ENCODE measurements at regions of chr9 and their contacts with region 1.

Region 1: DNA sequence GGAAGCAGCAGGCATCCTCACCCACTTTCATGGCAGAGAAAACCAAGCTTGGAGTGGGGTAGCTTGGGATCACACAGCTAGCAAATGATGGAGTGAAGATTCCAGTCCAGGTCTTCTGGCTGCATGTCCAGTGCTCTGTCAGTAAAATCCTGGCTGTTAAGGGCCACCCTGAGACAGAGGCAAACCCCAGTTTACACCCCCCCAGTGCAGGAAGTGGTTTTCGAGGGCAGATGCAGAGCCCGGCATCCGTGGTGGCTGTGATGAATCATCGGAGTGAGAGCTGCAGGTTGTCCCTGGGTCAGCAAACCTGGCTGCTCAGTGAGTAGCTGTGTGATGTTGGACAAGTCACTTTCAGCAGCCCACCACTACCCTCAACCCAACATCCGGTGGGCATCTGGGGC is 115.4 kb downstream of the RGS3 start:
- DNase-seq: peak; percentile 95
- H3K4me3 Mint-ChIP-seq: peak overlapping the region; percentile 81
- H3K27ac Mint-ChIP-seq: peak overlapping the region; percentile 92
- H3K4me1 Mint-ChIP-seq: peaks cover 70% of the 10 kb centered on the region
- H3K27me3 Mint-ChIP-seq: no peaks in the 10 kb centered on the region

Region 2: DNA sequence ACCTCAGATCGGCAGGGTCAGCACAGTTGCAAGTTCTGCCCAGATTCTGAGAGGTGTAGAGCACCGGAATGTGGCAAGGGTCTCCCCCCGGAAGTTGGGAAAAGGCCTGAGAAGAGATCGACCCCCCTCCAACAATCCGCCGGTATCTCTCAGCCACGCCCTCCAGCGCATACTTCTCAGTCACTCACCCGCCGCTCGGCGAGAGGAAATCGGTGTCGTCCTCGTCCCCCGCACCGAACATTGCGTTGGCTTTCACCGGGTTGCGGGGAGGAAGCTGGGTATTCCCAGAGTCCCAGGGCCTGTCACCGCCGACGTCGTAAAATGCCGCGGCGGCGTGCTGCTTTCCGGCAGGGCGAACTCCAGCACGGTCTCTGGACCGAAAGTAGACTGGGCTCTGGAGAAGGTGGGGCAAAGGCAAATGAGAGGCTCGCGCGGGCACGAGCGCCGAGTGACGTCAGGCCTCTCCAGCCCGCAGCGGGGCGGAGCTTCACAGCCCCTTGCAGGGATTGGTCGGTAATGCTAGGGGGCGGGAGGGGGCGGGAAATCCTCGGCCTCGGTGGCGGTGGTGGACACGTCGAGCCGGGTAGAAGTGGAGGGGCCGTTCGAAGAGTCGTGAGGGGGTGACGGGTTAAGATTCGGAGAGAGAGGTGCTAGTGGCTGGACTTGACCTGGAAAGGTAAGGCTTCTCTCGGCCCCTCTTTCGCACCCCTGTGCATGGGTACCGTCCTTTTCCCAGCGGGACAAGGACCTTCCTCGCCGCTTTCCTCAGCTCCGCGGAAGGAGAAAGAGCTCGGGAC is 357.7 kb before region 1 on chr9 and contains the starts of genes FKBP15 and SLC31A1:
- CTCF ChIA-PET with region 1: no interaction called
- intact Hi-C with region 1: loop called (anchors 1 kb)
- DNase-seq: peak; percentile 98
- H3K4me3 Mint-ChIP-seq: peak within 1 kb of the TSS; percentile 95
- H3K27ac Mint-ChIP-seq: peak within 1 kb of the TSS; percentile 91
- H3K4me1 Mint-ChIP-seq: peaks cover 38% of the 10 kb centered on the region
- H3K27me3 Mint-ChIP-seq: no peaks in the 10 kb centered on the region
- total RNA-seq, gene FKBP15: 14.7 to 15.8 TPM
- total RNA-seq, gene SLC31A1: 8.1 to 8.2 TPM

Region 3: DNA sequence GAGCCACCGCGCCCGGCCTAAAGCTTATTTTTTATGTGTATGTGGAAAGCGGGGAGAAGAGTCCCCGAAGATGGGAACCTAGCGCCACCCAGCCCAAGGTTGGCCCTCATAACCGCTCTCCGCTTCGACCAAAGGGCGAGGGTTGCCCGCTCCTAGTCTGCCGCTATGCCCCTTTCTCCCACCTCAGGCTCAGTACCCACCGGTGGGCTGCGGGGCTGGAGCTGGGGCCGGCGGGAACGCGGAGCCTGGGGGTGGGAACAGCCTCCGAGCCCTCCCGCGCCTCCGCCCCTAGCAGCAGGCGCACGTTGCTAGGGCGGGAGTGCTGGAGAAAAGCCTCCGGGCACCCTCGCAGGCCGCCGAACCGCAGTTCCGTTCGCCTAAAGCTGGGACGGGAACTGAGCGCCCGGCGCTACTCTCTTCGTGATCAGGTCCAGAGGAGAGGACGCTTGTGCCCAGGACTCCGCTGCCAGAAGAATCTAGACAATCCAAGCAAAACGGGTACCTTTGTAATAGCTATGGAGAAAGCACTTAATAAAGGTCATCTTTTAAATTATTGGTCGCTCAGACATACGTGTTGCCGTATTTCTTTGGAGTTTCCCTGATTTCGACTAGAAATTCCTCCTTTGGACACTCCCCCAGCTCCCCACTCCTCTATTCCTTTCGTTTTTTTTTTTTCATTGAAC is 238.7 kb before region 1 on chr9 and contains the start of gene WDR31:
- CTCF ChIA-PET with region 1: no interaction called
- intact Hi-C with region 1: loop called (anchors 2 kb)
- DNase-seq: peak; percentile 85
- H3K4me3 Mint-ChIP-seq: peak within 1 kb of the TSS; percentile 84
- H3K27ac Mint-ChIP-seq: peak within 1 kb of the TSS; percentile 55
- H3K4me1 Mint-ChIP-seq: peaks cover 35% of the 10 kb centered on the region
- H3K27me3 Mint-ChIP-seq: peaks cover 4% of the 10 kb centered on the region
- total RNA-seq, gene WDR31: 0.81 to 0.88 TPM

Region 4: GRCh38 chr9:113410207-113410864 is 168.5 kb before region 1 on chr9 and contains the starts of genes C9orf43 and POLE3:
- CTCF ChIA-PET with region 1: interaction called, 7 read pairs
- intact Hi-C with region 1: loop called (anchors 1 kb)
- DNase-seq: peak; percentile 97
- H3K4me3 Mint-ChIP-seq: peak within 1 kb of the TSS; percentile 99
- H3K27ac Mint-ChIP-seq: peak within 1 kb of the TSS; percentile 100
- H3K4me1 Mint-ChIP-seq: peaks cover 38% of the 10 kb centered on the region
- H3K27me3 Mint-ChIP-seq: no peaks in the 10 kb centered on the region
- total RNA-seq, gene C9orf43: 0.83 to 0.84 TPM
- total RNA-seq, gene POLE3: 34.1 to 37.4 TPM

Region 5: GRCh38 chr9:113511856-113512761 is 66.8 kb before region 1 on chr9:
- CTCF ChIA-PET with region 1: interaction called, 16 read pairs
- intact Hi-C with region 1: loop called (anchors 1 kb)
- DNase-seq: peak; percentile 82
- H3K4me3 Mint-ChIP-seq: peak overlapping the region; percentile 41
- H3K27ac Mint-ChIP-seq: peak overlapping the region; percentile 85
- H3K4me1 Mint-ChIP-seq: peaks cover 50% of the 10 kb centered on the region
- H3K27me3 Mint-ChIP-seq: peaks cover 2% of the 10 kb centered on the region

Region 6: DNA sequence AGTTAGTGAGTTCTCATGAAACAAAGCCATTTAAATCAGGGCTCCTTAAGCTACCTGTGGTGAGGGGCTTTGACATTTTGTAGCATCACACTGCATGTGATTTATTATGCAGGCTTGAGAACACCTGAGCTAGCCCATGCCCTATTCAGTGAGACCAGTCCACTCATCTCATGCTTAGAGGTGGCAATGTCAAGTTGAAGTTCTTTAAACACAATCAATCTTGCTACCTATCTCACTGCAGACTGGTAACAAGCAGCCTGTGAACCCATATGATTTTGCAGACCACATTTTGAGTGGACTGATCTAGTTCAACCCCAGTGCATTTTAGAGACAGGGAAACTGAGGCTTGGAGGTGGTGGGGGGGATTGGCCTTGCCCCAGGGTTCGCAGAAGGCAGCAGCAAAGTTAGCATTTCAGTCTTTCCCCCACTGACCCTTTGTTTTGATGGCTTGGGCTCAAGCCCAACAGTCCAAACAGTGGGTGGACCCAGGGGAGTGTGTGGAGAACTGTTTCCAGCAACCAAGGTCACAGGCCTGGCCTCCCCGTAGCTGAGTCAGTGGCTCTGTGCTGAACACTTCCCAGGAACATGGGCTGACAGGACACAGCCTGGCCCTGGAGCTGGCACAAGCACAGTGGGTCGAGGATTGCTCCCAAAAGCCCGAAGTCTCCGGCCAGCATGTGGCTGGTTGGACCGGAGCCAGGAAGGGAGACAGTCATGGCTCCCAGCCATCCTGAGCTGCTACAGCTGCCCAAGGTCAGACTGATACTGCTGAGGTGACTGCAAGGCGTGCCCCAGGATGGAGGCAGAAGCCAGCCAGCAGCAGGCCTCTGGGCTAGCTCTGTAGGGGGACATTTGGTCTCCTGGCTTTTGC is 20.0 kb before region 1 on chr9:
- CTCF ChIA-PET with region 1: interaction called, 3 read pairs
- intact Hi-C with region 1: loop called (anchors 2 kb)
- DNase-seq: no peak
- H3K4me3 Mint-ChIP-seq: no peak overlapping the region
- H3K27ac Mint-ChIP-seq: no peak overlapping the region
- H3K4me1 Mint-ChIP-seq: peaks cover 24% of the 10 kb centered on the region
- H3K27me3 Mint-ChIP-seq: no peaks in the 10 kb centered on the region

Region 7: GRCh38 chr9:113657703-113658544 is 79.0 kb after region 1 on chr9:
- CTCF ChIA-PET with region 1: interaction called, 440 read pairs
- intact Hi-C with region 1: loop called (anchors 2 kb)
- DNase-seq: peak; percentile 88
- H3K4me3 Mint-ChIP-seq: no peak overlapping the region
- H3K27ac Mint-ChIP-seq: no peak overlapping the region
- H3K4me1 Mint-ChIP-seq: no peaks in the 10 kb centered on the region
- H3K27me3 Mint-ChIP-seq: peaks cover 6% of the 10 kb centered on the region

Measured in activated naive CD4-positive, alpha-beta T cell treated with anti-CD3 and anti-CD28 coated beads for 36 hours (primary cell).